ENCODE measurements at regions of chr10 and their contacts with region 1.

Region 1: GRCh38 chr10:11631890-11632587 is 20.6 kb upstream of the USP6NL start:
- DNase-seq: peak; percentile 76
- H3K4me3 Mint-ChIP-seq: no peak overlapping the region
- H3K27ac Mint-ChIP-seq: no peak overlapping the region
- H3K4me1 Mint-ChIP-seq: peaks cover 13% of the 10 kb centered on the region
- H3K27me3 Mint-ChIP-seq: no peaks in the 10 kb centered on the region

Region 2: DNA sequence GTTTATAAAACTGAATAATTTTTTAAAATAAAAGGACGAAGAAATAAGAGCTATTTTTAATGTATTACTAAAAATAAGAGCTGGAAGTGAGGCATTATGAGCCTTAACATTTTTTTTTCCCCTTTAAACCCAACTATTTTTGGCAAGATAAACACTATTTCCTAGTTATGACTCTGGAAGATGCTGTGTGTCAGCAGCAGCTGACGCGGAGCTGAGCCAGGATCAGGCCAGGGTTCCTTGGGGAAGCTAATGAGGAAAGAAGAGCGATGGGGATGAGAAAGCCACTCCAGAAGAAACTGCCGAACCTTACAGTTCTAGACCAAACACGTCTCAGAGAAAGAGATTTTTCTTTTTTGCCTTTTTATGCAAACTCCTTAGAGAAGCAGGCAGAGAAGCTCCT is 106.5 kb before region 1 on chr10:
- CTCF ChIA-PET with region 1: no interaction called
- intact Hi-C with region 1: no loop called
- DNase-seq: no peak
- H3K4me3 Mint-ChIP-seq: no peak overlapping the region
- H3K27ac Mint-ChIP-seq: no peak overlapping the region
- H3K4me1 Mint-ChIP-seq: peaks cover 15% of the 10 kb centered on the region
- H3K27me3 Mint-ChIP-seq: no peaks in the 10 kb centered on the region

Region 3: GRCh38 chr10:11684717-11685645 is 52.9 kb after region 1 on chr10:
- CTCF ChIA-PET with region 1: no interaction called
- intact Hi-C with region 1: loop called (anchors 1 kb)
- DNase-seq: peak; percentile 86
- H3K4me3 Mint-ChIP-seq: peak overlapping the region; percentile 75
- H3K27ac Mint-ChIP-seq: peak overlapping the region; percentile 95
- H3K4me1 Mint-ChIP-seq: peaks cover 36% of the 10 kb centered on the region
- H3K27me3 Mint-ChIP-seq: peaks cover 1% of the 10 kb centered on the region

Measured in activated naive CD4-positive, alpha-beta T cell treated with anti-CD3 and anti-CD28 coated beads for 36 hours (primary cell).